ENCODE measurements at regions of chr1 and their contacts with region 1.

Region 1: GRCh38 chr1:162069328-162070093 is at the start of gene NOS1AP:
- DNase-seq: peak; percentile 67 to 90 (median 83)
- H3K4me3 ChIP-seq: peak within 1 kb of the TSS; percentile 51 to 94 (median 78)
- H3K27ac ChIP-seq: peak within 1 kb of the TSS in 42 of 59 donors; percentile 25 to 87 (median 70)
- H3K27me3 ChIP-seq: no peaks in the 10 kb centered on the region
- CTCF ChIP-seq: peak in 16 of 56 donors; percentile 8 to 57 (median 24)
- total RNA-seq, gene NOS1AP: 23.1 to 93.8 (median 58.4) TPM

Region 2: GRCh38 chr1:162040681-162041080 is 28.8 kb before region 1 on chr1:
- intact Hi-C with region 1: no loop called
- DNase-seq: no peak
- H3K4me3 ChIP-seq: no peak overlapping the region
- H3K27ac ChIP-seq: no peak overlapping the region
- H3K27me3 ChIP-seq: peaks cover 0 to 3% (median 0%) of the 10 kb centered on the region in 45 donors
- CTCF ChIP-seq: peak in 22 of 56 donors; percentile 4 to 39 (median 22)

Region 3: DNA sequence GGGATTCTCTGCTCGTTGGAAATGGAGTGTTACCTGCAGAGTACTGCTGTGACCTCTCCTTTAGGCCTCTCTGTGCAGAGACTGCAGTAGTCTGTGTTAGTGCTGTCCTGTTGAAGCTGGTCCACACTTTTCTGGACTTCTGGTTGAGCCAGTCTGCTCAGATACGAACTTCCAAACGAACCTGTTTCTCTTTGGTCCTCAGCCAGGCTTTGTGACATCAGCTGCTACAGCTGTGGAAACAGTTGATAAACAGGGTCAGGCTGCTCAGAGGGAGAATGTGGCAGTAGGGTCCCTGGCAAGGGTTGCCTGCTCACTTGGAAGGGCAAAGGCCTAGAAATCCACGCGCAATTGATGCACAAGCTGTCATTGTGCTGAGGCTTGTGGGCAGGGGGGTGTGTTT is 98.7 kb after region 1 on chr1:
- intact Hi-C with region 1: loop called in 1 of 2 experiments (anchors 5 kb)
- DNase-seq: no peak
- H3K4me3 ChIP-seq: no peak overlapping the region
- H3K27ac ChIP-seq: peak overlapping the region in 49 of 59 donors; percentile 1 to 80 (median 56)
- H3K27me3 ChIP-seq: no peaks in the 10 kb centered on the region
- CTCF ChIP-seq: no peak